Dorsolateral prefrontal cortex (tissue), 120 donors: ENCODE measurements at regions of chr5 and their contacts with region 1.

Region 1: GRCh38 chr5:170522211-170523133 is 18.7 kb downstream of the KCNIP1 start:
- DNase-seq: peak in 1 of 10 donors; percentile 59
- H3K4me3 ChIP-seq: peak overlapping the region in 11 of 59 donors; percentile 0 to 39 (median 14)
- H3K27ac ChIP-seq: peak overlapping the region in 10 of 59 donors; percentile 1 to 55 (median 21)
- H3K27me3 ChIP-seq: no peaks in the 10 kb centered on the region
- CTCF ChIP-seq: no peak

Region 2: DNA sequence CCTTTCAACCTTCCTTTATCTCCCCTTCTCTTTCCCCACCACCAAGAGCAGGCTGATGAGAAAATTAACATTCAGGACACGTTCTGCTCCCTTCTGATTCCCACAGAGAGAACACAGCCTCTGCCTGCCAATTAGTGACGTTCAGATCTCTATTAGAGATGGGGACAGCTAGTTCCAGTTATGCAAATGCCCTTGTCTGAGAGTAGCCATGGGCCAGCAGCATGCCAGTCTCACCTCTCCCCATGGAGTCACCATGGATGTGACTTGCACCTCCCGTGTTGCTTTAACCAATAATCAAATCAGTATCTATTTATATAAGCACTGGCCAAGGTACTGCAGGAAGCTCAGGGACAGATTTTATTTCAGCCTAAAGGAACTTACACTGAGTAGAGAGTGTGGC is 42.6 kb after region 1 on chr5:
- intact Hi-C with region 1: loop called in 1 of 2 experiments (anchors 5 kb)
- DNase-seq: peak in 6 of 10 donors; percentile 55 to 84 (median 65)
- H3K4me3 ChIP-seq: no peak overlapping the region
- H3K27ac ChIP-seq: peak overlapping the region in 45 of 59 donors; percentile 3 to 81 (median 60)
- H3K27me3 ChIP-seq: peaks cover 0 to 2% (median 0%) of the 10 kb centered on the region in 45 donors
- CTCF ChIP-seq: peak in 1 of 56 donors; percentile 10